WTC11 (cell line): ENCODE measurements at regions of chr22 and their contacts with region 1.

Region 1: GRCh38 chr22:26563022-26563421 is 26.9 kb downstream of the TPST2 start:
- DNase-seq: no peak
- ATAC-seq: peak; percentile 15; the same call in 1 of the 2 replicates
- H3K4me3 Mint-ChIP-seq: no peak overlapping the region
- H3K27ac Mint-ChIP-seq: peak overlapping the region; percentile 79
- H3K4me1 Mint-ChIP-seq: peaks cover 83% of the 10 kb centered on the region
- H3K27me3 Mint-ChIP-seq: no peaks in the 10 kb centered on the region; the same call in 1 of the 2 replicates
- CTCF ChIP-seq: no peak

Region 2: GRCh38 chr22:26585104-26585790 is 22.2 kb after region 1 on chr22:
- CTCF ChIA-PET with region 1: interaction called, 12 read pairs
- POLR2A ChIA-PET with region 1: no interaction called
- DNase-seq: no peak
- ATAC-seq: no peak
- H3K4me3 Mint-ChIP-seq: no peak overlapping the region
- H3K27ac Mint-ChIP-seq: peak overlapping the region; percentile 91
- H3K4me1 Mint-ChIP-seq: peaks cover 64% of the 10 kb centered on the region
- H3K27me3 Mint-ChIP-seq: no peaks in the 10 kb centered on the region
- CTCF ChIP-seq: no peak

Region 3: DNA sequence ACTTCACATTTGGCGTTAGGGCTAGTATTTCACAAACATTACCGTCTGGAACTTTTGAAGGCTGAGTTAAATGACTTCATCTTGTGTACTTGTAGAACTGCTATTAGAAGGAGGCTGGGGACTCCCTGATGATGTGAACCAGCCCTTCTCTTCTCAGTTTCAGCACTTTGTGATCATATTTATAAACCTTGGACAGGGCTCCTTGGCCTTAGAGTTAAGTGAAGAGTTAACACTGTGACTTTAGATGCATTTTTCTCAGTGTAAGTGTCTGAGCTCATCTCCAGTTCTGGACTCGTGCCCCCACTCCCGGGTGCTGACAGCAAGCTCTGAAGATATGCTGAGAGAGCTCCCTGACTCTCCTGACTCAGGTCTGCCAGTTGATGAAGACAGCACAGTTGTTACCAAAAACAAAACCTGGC is 102.8 kb after region 1 on chr22:
- CTCF ChIA-PET with region 1: interaction called, 11 read pairs
- POLR2A ChIA-PET with region 1: no interaction called
- DNase-seq: no peak
- ATAC-seq: no peak
- H3K4me3 Mint-ChIP-seq: no peak overlapping the region
- H3K27ac Mint-ChIP-seq: no peak overlapping the region; the same call in 1 of the 2 replicates
- H3K4me1 Mint-ChIP-seq: peaks cover 30% of the 10 kb centered on the region
- H3K27me3 Mint-ChIP-seq: no peaks in the 10 kb centered on the region
- CTCF ChIP-seq: no peak

Region 4: GRCh38 chr22:26672590-26673468 is 109.8 kb after region 1 on chr22:
- CTCF ChIA-PET with region 1: interaction called, 11 read pairs
- POLR2A ChIA-PET with region 1: no interaction called
- DNase-seq: peak; percentile 90
- ATAC-seq: peak; percentile 76
- H3K4me3 Mint-ChIP-seq: peak overlapping the region; percentile 89
- H3K27ac Mint-ChIP-seq: peak overlapping the region; percentile 92
- H3K4me1 Mint-ChIP-seq: peaks cover 56% of the 10 kb centered on the region
- H3K27me3 Mint-ChIP-seq: no peaks in the 10 kb centered on the region
- CTCF ChIP-seq: no peak